ENCODE measurements at regions of chr22 and their contacts with region 1.

Region 1: GRCh38 chr22:45994491-45995404 is 17.8 kb upstream of the WNT7B start:
- DNase-seq: no peak
- H3K4me3 ChIP-seq: no peak overlapping the region
- H3K27me3 ChIP-seq: peaks cover 2% of the 10 kb centered on the region; the same call in 1 of the 2 replicates
- CTCF ChIP-seq: peak; percentile 95

Region 2: GRCh38 chr22:45984316-45984916 is 10.3 kb before region 1 on chr22:
- CTCF ChIA-PET with region 1: interaction called, 18 read pairs
- POLR2A ChIA-PET with region 1: no interaction called
- DNase-seq: no peak
- H3K4me3 ChIP-seq: no peak overlapping the region
- H3K27me3 ChIP-seq: peaks cover 8% of the 10 kb centered on the region
- CTCF ChIP-seq: no peak

Region 3: DNA sequence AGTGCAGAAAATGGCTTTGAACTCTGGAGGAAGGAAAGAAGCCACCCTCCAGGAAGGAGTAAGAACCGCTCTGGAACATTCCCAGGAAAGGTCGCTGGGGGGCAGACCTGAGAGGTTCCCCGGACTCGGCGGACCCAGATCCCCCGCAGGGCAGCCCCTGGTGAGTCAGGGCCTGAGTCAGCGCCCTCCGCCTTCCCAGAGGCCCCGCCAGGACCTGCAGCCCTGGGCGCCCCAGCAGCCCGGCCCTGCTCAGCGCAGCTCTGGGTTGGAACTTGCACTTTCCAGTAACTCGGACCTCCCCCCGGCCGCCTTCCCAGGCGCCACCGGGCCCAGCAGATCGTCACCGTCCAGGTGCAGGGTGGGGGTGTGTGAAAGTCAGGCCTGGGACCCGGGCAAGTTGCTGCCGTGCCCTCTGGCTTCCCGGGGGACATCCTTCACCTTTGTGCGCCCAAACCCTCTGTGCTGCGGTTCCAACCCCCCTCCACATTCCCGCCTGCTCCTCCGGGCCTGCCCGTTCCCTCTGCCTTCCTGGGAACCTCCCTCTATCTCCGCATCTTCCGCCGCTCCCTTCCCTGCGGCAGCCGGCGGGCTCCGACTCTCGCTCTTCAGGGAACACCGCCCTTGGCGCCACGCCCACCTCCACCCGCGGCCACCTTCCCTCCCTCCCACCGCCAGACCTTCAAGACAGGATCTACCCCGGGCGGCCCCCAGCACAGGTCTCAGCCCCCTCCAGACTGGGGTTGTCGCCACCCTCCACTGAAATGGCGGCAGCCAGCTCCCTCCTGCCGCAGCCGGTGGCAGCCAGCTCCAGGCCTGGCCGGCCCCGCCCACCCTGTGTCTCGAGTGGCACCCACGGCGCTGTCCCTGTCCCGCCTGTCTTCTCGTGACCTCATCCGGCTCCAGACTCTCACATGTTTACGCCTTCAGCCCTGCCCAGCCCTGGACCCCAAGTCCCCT is 19.0 kb after region 1 on chr22:
- CTCF ChIA-PET with region 1: interaction called, 60 read pairs
- POLR2A ChIA-PET with region 1: no interaction called
- DNase-seq: peak; percentile 80
- H3K4me3 ChIP-seq: peak overlapping the region; percentile 47
- H3K27me3 ChIP-seq: no peaks in the 10 kb centered on the region
- CTCF ChIP-seq: peak; percentile 81

Region 4: GRCh38 chr22:46071451-46072109 is 76.8 kb after region 1 on chr22:
- CTCF ChIA-PET with region 1: interaction called, 13 read pairs
- POLR2A ChIA-PET with region 1: no interaction called
- DNase-seq: no peak
- H3K4me3 ChIP-seq: peak overlapping the region; percentile 98
- H3K27me3 ChIP-seq: no peaks in the 10 kb centered on the region
- CTCF ChIP-seq: no peak

Region 5: GRCh38 chr22:46105494-46106278 is 110.9 kb after region 1 on chr22:
- CTCF ChIA-PET with region 1: no interaction called
- POLR2A ChIA-PET with region 1: no interaction called
- DNase-seq: peak; percentile 76
- H3K4me3 ChIP-seq: no peak overlapping the region
- H3K27me3 ChIP-seq: no peaks in the 10 kb centered on the region
- CTCF ChIP-seq: no peak

Region 6: GRCh38 chr22:46116491-46116958 is 121.8 kb after region 1 on chr22:
- CTCF ChIA-PET with region 1: interaction called, 160 read pairs
- POLR2A ChIA-PET with region 1: no interaction called
- DNase-seq: no peak
- H3K4me3 ChIP-seq: no peak overlapping the region
- H3K27me3 ChIP-seq: no peaks in the 10 kb centered on the region
- CTCF ChIP-seq: peak; percentile 91

Region 7: GRCh38 chr22:46315976-46316375 is 321.2 kb after region 1 on chr22:
- CTCF ChIA-PET with region 1: interaction called, 27 read pairs
- POLR2A ChIA-PET with region 1: no interaction called
- DNase-seq: no peak
- H3K4me3 ChIP-seq: no peak overlapping the region
- H3K27me3 ChIP-seq: no peaks in the 10 kb centered on the region
- CTCF ChIP-seq: no peak